ENCODE measurements at regions of chr6 and their contacts with region 1.

Region 1: GRCh38 chr6:35973670-35974222 is 50.7 kb downstream of the SLC26A8 start:
- DNase-seq: no peak
- ATAC-seq: no peak
- H3K4me3 ChIP-seq: no peak overlapping the region
- H3K27ac ChIP-seq: no peak overlapping the region
- H3K4me1 ChIP-seq: no peaks in the 10 kb centered on the region
- H3K27me3 ChIP-seq: no peaks in the 10 kb centered on the region
- CTCF ChIP-seq: no peak
- POLR2A ChIP-seq: no peak
- RAD21 ChIP-seq: no peak

Region 2: GRCh38 chr6:35534407-35535170 is 439.2 kb before region 1 on chr6:
- CTCF ChIA-PET with region 1: no interaction called
- POLR2A ChIA-PET with region 1: no interaction called
- dilution Hi-C with region 1: no loop called
- in situ Hi-C with region 1: loop called (anchors 25 kb)
- intact Hi-C with region 1: no loop called
- DNase-seq: no peak
- ATAC-seq: 0 out of 2 replicates have a peak, but pooled peaks have one; percentile 27
- H3K4me3 ChIP-seq: no peak overlapping the region
- H3K27ac ChIP-seq: no peak overlapping the region
- H3K4me1 ChIP-seq: no peaks in the 10 kb centered on the region
- H3K27me3 ChIP-seq: peaks cover 27% of the 10 kb centered on the region
- CTCF ChIP-seq: no peak
- POLR2A ChIP-seq: no peak
- RAD21 ChIP-seq: no peak

Region 3: GRCh38 chr6:36000451-36000850 is 26.7 kb after region 1 on chr6:
- CTCF ChIA-PET with region 1: no interaction called
- POLR2A ChIA-PET with region 1: no interaction called
- dilution Hi-C with region 1: no loop called
- in situ Hi-C with region 1: no loop called
- intact Hi-C with region 1: loop called (anchors 2 kb)
- DNase-seq: no peak
- ATAC-seq: no peak
- H3K4me3 ChIP-seq: no peak overlapping the region
- H3K27ac ChIP-seq: no peak overlapping the region
- H3K4me1 ChIP-seq: no peaks in the 10 kb centered on the region
- H3K27me3 ChIP-seq: peaks cover 8% of the 10 kb centered on the region
- CTCF ChIP-seq: no peak
- POLR2A ChIP-seq: no peak
- RAD21 ChIP-seq: no peak

Region 4: GRCh38 chr6:36027501-36028087 is 53.8 kb after region 1 on chr6 and contains the start of gene MAPK14:
- CTCF ChIA-PET with region 1: no interaction called
- POLR2A ChIA-PET with region 1: no interaction called
- dilution Hi-C with region 1: no loop called
- in situ Hi-C with region 1: no loop called
- intact Hi-C with region 1: no loop called
- DNase-seq: peak; percentile 100
- ATAC-seq: peak; percentile 85
- H3K4me3 ChIP-seq: peak within 1 kb of the TSS; percentile 65
- H3K27ac ChIP-seq: peak within 1 kb of the TSS; percentile 94
- H3K4me1 ChIP-seq: peaks cover 6% of the 10 kb centered on the region; the same call in 1 of the 2 replicates
- H3K27me3 ChIP-seq: no peaks in the 10 kb centered on the region
- CTCF ChIP-seq: peak; percentile 95
- POLR2A ChIP-seq: peak; percentile 88
- RAD21 ChIP-seq: peak; percentile 88
- total RNA-seq, gene MAPK14: 69.7 and 74.4 TPM in 2 replicates

Measured in IMR-90 (cell line).